ENCODE measurements at regions of chr2 and their contacts with region 1.

Region 1: DNA sequence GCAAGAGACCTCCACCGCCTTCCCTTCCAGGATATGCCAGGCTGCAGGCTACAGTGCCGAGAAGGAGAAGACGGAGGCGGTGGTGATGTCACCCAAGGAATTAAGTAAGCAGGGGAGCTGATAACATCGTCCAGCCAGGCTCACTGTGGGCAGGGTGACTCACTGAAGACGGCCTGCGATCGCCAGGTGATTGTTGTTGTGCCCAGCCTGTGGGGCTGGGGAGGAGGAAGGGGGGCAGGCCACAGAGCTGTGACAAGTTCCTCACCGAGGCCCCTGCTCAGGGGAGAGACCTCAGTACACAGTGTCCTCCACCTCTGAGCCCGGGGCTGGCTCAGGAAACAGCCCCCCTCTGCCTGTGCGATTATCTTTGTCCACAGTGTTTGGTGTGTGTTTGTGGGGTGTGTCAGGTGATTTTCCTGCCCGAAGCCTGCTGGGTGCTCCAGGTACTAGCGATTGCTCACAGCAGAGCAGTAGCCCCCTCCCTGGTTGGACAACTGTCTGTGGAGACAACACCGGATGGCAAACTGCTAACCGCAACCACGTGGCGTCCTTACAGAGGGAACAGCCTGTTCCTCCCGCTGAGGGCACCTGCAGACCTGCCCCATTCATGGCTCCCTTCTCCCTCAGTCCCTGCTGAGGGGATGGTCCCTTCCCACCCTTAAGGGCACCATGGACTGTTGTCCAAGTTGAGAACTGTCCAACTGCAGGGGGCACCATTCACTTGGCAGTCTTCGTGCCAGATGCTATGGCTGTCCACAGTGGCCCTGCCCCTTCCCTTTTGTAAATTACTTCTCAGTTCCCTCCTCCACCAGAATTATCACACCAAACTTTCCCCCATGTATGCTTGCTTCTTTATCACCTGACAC is 95.1 kb downstream of the ZFP36L2 start:
- DNase-seq: peak; percentile 61 to 67
- ATAC-seq: peak; percentile 31 to 76 (median 52)
- H3K4me3 ChIP-seq: peak overlapping the region in 1 of 10 donors; percentile 10
- H3K27ac ChIP-seq: peak overlapping the region in 9 of 10 donors; percentile 20 to 89 (median 46)
- H3K4me1 ChIP-seq: peaks cover 19 to 99% (median 52%) of the 10 kb centered on the region in 9 donors
- H3K27me3 ChIP-seq: no peaks in the 10 kb centered on the region
- CTCF ChIP-seq: peak; percentile 25 to 64 (median 55)

Region 2: DNA sequence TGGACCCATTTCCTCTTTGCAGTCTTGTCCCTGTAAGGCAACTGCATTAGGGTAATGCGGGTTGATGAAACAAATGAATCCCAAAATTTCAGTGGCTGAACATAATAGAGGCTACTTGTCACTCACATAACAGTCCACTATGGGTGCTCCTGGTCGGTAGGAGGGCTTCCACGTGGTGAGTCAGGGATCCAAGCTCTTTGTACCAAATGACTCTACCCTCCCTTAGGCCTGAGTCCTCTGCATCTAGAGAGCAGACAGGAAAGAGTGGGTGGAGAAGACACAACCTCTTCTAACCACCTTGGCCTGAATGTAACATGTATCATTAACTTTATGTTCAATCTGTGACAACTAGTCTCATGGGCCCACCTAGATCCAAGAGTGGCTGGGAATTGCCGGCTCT is 252.7 kb before region 1 on chr2:
- intact Hi-C with region 1: loop called in 1 of 10 experiments (anchors 1 kb)
- DNase-seq: no peak
- ATAC-seq: no peak
- H3K4me3 ChIP-seq: no peak overlapping the region
- H3K27ac ChIP-seq: peak overlapping the region; percentile 61 to 95 (median 82)
- H3K4me1 ChIP-seq: peaks cover 33 to 86% (median 71%) of the 10 kb centered on the region in 9 donors
- H3K27me3 ChIP-seq: no peaks in the 10 kb centered on the region
- CTCF ChIP-seq: no peak

Region 3: GRCh38 chr2:42974721-42975717 is 156.2 kb before region 1 on chr2:
- intact Hi-C with region 1: loop called in 2 of 10 experiments (anchors 5 kb)
- DNase-seq: peak; percentile 79 to 85
- ATAC-seq: peak; percentile 85 to 92 (median 88)
- H3K4me3 ChIP-seq: peak overlapping the region in 9 of 10 donors; percentile 16 to 61 (median 52)
- H3K27ac ChIP-seq: peak overlapping the region in 6 of 10 donors; percentile 59 to 81 (median 72)
- H3K4me1 ChIP-seq: peaks cover 12 to 32% (median 19%) of the 10 kb centered on the region in 9 donors
- H3K27me3 ChIP-seq: no peaks in the 10 kb centered on the region
- CTCF ChIP-seq: peak; percentile 86 to 97 (median 89)

Region 4: GRCh38 chr2:43149482-43150107 is 18.3 kb after region 1 on chr2:
- intact Hi-C with region 1: no loop called
- DNase-seq: no peak
- ATAC-seq: no peak
- H3K4me3 ChIP-seq: no peak overlapping the region
- H3K27ac ChIP-seq: no peak overlapping the region
- H3K4me1 ChIP-seq: peaks cover 0 to 26% (median 7%) of the 10 kb centered on the region in 9 donors
- H3K27me3 ChIP-seq: no peaks in the 10 kb centered on the region
- CTCF ChIP-seq: no peak

Region 5: GRCh38 chr2:43169987-43170386 is 38.7 kb after region 1 on chr2:
- intact Hi-C with region 1: loop called in 1 of 10 experiments (anchors 5 kb)
- DNase-seq: no peak
- ATAC-seq: no peak
- H3K4me3 ChIP-seq: no peak overlapping the region
- H3K27ac ChIP-seq: peak overlapping the region in 4 of 10 donors; percentile 32 to 89 (median 72)
- H3K4me1 ChIP-seq: peaks cover 9 to 78% (median 43%) of the 10 kb centered on the region in 9 donors
- H3K27me3 ChIP-seq: no peaks in the 10 kb centered on the region
- CTCF ChIP-seq: peak in 8 of 9 donors; percentile 11 to 57 (median 42)

Region 6: DNA sequence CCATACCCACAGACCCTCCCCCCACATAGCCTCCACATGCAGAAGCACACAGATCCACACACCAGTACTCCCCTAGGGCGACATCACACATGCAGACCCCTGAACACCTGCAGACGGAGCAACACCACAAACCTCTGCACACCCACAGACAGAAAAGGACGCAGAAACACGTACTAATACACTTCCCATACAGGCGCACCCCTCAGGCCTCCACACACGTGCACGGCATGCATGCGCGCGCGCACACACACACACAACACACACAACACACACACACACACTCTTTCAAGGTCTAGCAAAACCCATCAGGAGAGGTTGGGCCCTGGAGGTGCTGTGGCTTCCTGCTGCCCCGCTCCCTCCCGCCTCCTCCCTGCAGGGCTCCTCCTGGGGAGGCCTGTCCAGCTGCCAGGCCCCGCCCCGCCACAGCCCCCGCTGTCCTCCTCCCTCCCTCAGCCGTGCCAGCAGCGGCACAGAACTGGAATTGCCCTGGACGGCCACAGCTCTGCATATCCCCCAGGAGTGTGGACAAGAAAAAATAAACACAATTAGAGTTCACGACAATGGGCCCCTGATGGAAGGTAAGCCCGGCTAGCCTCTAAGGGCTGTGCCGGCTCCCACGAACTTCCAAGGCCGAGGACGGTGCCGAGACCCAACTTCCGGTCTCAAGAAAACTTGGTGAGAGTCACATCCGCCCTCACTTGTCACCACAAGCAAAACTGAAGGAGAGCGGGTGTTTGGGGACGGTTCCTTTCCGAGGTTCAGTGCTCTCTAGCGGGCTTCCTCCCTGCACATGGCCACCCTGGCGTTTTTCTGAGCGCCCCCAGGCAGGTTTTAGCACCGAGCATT is 88.3 kb after region 1 on chr2:
- intact Hi-C with region 1: loop called in 3 of 10 experiments (anchors 2 to 5 kb)
- DNase-seq: peak; percentile 90 to 91
- ATAC-seq: peak; percentile 72 to 89 (median 80)
- H3K4me3 ChIP-seq: peak overlapping the region in 9 of 10 donors; percentile 30 to 96 (median 88)
- H3K27ac ChIP-seq: peak overlapping the region; percentile 96 to 100 (median 99)
- H3K4me1 ChIP-seq: peaks cover 14 to 84% (median 65%) of the 10 kb centered on the region in 9 donors
- H3K27me3 ChIP-seq: no peaks in the 10 kb centered on the region
- CTCF ChIP-seq: peak in 3 of 9 donors; percentile 16 to 32 (median 16)

Region 7: GRCh38 chr2:43478411-43479086 is 347.3 kb after region 1 on chr2:
- intact Hi-C with region 1: loop called in 7 of 10 experiments (anchors 5 to 10 kb)
- DNase-seq: no peak
- ATAC-seq: no peak
- H3K4me3 ChIP-seq: no peak overlapping the region
- H3K27ac ChIP-seq: no peak overlapping the region
- H3K4me1 ChIP-seq: peaks cover 8 to 34% (median 21%) of the 10 kb centered on the region in 9 donors
- H3K27me3 ChIP-seq: no peaks in the 10 kb centered on the region
- CTCF ChIP-seq: no peak

Region 8: DNA sequence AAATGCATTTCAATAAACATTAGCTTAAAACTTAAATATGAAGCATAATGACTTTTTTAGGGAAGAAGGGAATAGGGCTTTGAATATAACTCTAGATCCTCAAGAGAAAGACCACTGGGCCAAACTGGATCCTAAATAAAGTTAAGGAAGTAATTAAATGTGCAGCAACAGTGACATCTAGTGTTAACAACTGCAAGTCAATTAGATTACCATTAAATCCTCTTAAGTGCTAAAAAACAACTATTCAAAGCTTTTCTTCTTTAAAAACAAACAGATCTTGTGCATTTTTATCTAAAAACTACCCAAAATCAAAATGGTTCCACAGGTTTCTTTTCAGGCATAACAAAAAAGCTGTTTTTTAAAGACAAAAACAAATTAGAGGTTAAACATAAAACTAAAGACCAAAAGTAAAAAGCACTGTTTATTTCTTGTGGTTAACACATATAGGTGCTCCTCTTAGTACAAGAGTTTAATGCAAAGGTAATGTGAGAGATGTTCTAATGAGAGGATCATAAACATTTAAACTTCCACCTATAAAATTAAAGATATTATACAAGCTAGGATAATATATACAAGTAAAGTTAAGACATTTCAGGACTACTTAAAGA is 353.2 kb after region 1 on chr2:
- intact Hi-C with region 1: loop called in 8 of 10 experiments (anchors 5 to 10 kb)
- DNase-seq: peak in 1 of 2 donors; percentile 20
- ATAC-seq: peak in 6 of 8 donors; percentile 60 to 68 (median 64)
- H3K4me3 ChIP-seq: no peak overlapping the region
- H3K27ac ChIP-seq: peak overlapping the region in 5 of 10 donors; percentile 13 to 69 (median 65)
- H3K4me1 ChIP-seq: peaks cover 8 to 48% (median 29%) of the 10 kb centered on the region in 9 donors
- H3K27me3 ChIP-seq: no peaks in the 10 kb centered on the region
- CTCF ChIP-seq: peak; percentile 27 to 83 (median 71)